Activated naive CD8-positive, alpha-beta T cell treated with anti-CD3 and anti-CD28 coated beads, Interleukin-2, amount 10 ng/mL, durations not matched to agents 7 days and 5 days (primary cell): ENCODE measurements at regions of chr12 and their contacts with region 1.

Region 1: DNA sequence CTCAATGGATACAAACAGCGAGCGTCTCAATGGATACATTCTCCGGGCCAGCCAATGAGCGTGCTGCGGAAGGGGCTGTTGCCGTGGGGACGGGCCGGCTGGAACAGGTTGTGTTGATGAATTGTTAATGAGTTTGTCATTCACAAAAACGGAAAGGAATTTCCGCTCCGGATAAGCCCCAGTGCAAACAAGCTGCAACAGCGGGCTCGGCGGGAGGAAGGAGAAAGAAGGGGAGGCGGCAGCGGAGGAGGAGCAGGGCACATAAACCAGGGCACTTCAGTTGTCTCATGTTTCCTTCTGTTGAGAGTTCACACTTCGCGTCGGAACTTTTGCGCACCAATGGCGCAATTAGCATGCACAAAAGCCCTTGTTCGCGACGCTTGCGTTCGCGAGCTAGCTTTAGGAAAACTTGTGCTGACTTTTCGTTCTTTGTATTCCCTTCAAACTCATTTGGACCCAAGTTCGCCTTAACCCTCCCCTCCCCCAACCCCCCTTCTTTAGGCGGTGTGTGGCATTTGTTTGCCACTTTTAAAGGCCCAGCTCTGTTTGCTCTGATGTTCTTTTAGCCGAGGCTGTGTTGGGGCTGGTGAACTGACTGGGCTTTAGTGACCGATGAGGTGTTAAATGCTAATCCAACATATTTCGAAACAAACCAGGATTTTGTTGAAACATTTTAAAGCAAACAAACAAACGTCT is at the start of gene DUSP6:
- DNase-seq: peak; percentile 90
- ATAC-seq: peak; percentile 78
- H3K4me3 Mint-ChIP-seq: peak within 1 kb of the TSS; percentile 98
- H3K27ac Mint-ChIP-seq: peak within 1 kb of the TSS; percentile 97
- H3K4me1 Mint-ChIP-seq: peaks cover 36% of the 10 kb centered on the region
- H3K27me3 Mint-ChIP-seq: no peaks in the 10 kb centered on the region
- total RNA-seq, gene DUSP6: 77.5 to 85.0 TPM

Region 2: DNA sequence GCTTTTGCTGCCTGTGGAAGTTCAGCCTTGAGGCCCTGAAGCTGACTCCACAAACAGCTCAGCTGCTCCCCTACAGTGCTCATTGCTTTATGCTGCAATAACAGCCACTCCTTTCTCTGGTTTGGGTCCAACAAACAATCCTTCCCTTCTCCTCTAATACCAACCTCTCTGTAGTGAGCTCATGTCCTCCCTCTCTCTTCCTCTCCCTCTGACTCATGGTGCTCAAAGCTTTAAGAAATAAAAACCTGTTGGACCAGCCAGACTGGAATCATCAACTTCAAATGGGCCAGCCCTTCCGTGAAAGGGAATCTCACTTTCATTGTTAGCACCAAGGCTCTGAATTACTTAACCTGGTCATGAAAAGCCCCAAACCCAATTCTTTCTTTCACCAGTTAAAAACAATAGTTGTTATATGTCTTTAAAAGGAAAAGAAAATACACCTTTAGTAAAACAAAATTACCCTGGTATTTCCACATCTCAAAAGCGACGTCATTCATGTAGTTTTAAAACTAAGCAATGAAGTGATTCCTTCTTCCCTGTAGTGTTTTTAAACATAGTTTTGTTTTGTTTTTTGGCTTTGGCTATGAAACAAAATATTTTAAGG is 126.7 kb before region 1 on chr12:
- POLR2A ChIA-PET with region 1: interaction called, 36 read pairs
- DNase-seq: no peak
- ATAC-seq: peak; percentile 48
- H3K4me3 Mint-ChIP-seq: peak overlapping the region; percentile 70
- H3K27ac Mint-ChIP-seq: peak overlapping the region; percentile 88
- H3K4me1 Mint-ChIP-seq: peaks cover 52% of the 10 kb centered on the region
- H3K27me3 Mint-ChIP-seq: no peaks in the 10 kb centered on the region

Region 3: GRCh38 chr12:89280833-89281538 is 71.7 kb before region 1 on chr12:
- POLR2A ChIA-PET with region 1: interaction called, 20 read pairs
- DNase-seq: no peak
- ATAC-seq: peak; percentile 88
- H3K4me3 Mint-ChIP-seq: peak overlapping the region; percentile 60
- H3K27ac Mint-ChIP-seq: peak overlapping the region; percentile 81
- H3K4me1 Mint-ChIP-seq: peaks cover 21% of the 10 kb centered on the region
- H3K27me3 Mint-ChIP-seq: no peaks in the 10 kb centered on the region

Region 4: GRCh38 chr12:89373763-89374572 is 21.3 kb after region 1 on chr12:
- POLR2A ChIA-PET with region 1: interaction called, 18 read pairs
- DNase-seq: no peak
- ATAC-seq: no peak
- H3K4me3 Mint-ChIP-seq: no peak overlapping the region
- H3K27ac Mint-ChIP-seq: no peak overlapping the region
- H3K4me1 Mint-ChIP-seq: peaks cover 42% of the 10 kb centered on the region
- H3K27me3 Mint-ChIP-seq: peaks cover 3% of the 10 kb centered on the region

Region 5: GRCh38 chr12:89461649-89462612 is 109.3 kb after region 1 on chr12:
- POLR2A ChIA-PET with region 1: interaction called, 54 read pairs
- DNase-seq: no peak
- ATAC-seq: peak; percentile 88
- H3K4me3 Mint-ChIP-seq: peak overlapping the region; percentile 85
- H3K27ac Mint-ChIP-seq: peak overlapping the region; percentile 75
- H3K4me1 Mint-ChIP-seq: peaks cover 47% of the 10 kb centered on the region
- H3K27me3 Mint-ChIP-seq: no peaks in the 10 kb centered on the region

Region 6: GRCh38 chr12:89524541-89525285 is 172.1 kb after region 1 on chr12 and contains the start of gene GALNT4:
- POLR2A ChIA-PET with region 1: interaction called, 56 read pairs
- DNase-seq: peak; percentile 80
- ATAC-seq: peak; percentile 61
- H3K4me3 Mint-ChIP-seq: peak within 1 kb of the TSS; percentile 98
- H3K27ac Mint-ChIP-seq: peak within 1 kb of the TSS; percentile 97
- H3K4me1 Mint-ChIP-seq: peaks cover 53% of the 10 kb centered on the region
- H3K27me3 Mint-ChIP-seq: no peaks in the 10 kb centered on the region
- total RNA-seq, gene GALNT4: 15.6 to 16.3 TPM